ENCODE measurements at regions of chr2 and their contacts with region 1.

Region 1: DNA sequence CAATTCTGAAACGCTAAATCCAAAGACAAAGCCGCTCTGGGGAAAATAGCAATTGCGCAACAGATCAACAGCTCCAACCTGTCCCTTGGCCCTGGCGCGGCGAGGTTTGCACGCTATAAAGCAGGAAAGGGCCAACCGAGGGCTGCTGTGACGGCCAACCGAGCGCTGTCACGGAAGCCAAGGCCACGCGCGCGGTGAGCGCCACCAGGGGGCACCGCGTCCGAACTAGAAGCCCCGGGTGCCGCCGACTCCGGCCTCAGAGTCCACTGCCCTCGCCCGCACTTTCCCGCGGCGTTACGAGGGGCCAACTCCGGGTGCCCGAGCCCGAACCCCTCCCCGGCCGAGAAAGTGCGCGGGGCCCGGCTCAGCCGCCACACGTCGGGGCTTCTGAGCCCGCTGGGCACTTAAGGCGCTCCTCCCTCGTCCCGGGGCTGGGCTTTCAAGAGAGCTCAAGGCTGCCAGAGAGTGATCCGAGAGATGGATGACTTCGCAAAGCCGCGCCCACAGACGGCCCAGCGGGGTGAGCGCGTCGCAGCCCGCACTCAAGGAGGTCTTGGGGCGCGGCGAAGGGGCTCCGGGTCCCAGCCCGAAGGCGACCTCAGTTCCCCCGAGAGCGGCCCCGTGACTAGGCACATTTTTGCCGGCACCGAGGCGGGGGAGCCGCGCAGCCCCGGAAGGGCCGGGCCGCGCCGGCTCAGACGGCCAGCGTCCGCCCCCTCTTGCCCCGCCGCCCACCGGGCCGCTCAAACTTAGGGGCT is 897 bp downstream of the NFE2L2 start:
- DNase-seq: peak; percentile 89
- H3K4me3 ChIP-seq: peak overlapping the region; percentile 76
- CTCF ChIP-seq: peak; percentile 98

Region 2: DNA sequence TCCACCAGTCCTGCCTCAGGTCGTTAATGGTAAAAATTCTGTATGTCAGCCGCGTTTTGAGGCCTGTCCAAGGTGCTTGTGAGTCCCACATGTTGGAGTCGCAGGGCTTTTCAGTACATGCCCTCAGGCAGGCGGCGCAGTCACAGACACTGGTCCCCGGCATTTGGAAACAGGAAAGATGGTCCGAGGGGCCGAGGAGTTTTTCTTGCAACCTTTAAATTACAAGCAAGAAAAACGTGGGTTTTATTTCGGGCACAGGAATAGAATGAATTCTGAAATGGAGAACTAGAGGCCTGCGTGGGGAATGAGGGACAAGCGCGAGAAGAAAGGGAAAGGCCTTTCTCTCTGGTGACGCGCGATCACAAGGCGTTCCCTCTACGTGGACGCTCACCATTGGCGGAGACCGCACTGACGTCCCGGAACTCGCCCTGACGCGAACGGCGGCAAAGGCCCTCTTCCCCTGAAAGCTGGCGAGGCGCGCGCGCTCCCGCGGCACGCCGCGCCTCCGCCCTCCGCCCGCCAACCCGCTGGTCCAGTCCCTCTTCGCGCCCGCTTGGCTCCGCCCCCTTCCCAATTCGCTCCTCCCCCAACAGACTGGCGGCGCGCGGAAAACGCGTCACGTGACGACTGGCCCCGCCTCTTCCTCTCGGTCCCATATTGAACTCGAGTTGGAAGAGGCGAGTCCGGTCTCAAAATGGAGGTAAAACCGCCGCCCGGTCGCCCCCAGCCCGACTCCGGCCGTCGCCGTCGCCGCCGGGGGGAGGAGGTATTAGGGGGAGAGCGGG is 51.3 kb before region 1 on chr2 and contains the start of gene HNRNPA3:
- CTCF ChIA-PET with region 1: interaction called, 3 read pairs
- POLR2A ChIA-PET with region 1: interaction called, 20 read pairs
- DNase-seq: peak; percentile 91
- H3K4me3 ChIP-seq: peak within 1 kb of the TSS; percentile 65
- CTCF ChIP-seq: peak; percentile 23

Region 3: GRCh38 chr2:177239932-177240630 is 23.5 kb before region 1 on chr2:
- CTCF ChIA-PET with region 1: interaction called, 9 read pairs
- POLR2A ChIA-PET with region 1: interaction called, 12 read pairs
- DNase-seq: no peak
- H3K4me3 ChIP-seq: no peak overlapping the region
- CTCF ChIP-seq: no peak

Region 4: GRCh38 chr2:177281400-177282180 is 18.0 kb after region 1 on chr2:
- CTCF ChIA-PET with region 1: interaction called, 22 read pairs
- POLR2A ChIA-PET with region 1: interaction called, 14 read pairs
- DNase-seq: no peak
- H3K4me3 ChIP-seq: no peak overlapping the region
- CTCF ChIP-seq: no peak

Region 5: GRCh38 chr2:177419274-177419673 is 155.6 kb after region 1 on chr2:
- CTCF ChIA-PET with region 1: interaction called, 12 read pairs
- POLR2A ChIA-PET with region 1: no interaction called
- DNase-seq: peak; percentile 19
- H3K4me3 ChIP-seq: no peak overlapping the region
- CTCF ChIP-seq: no peak

Region 6: DNA sequence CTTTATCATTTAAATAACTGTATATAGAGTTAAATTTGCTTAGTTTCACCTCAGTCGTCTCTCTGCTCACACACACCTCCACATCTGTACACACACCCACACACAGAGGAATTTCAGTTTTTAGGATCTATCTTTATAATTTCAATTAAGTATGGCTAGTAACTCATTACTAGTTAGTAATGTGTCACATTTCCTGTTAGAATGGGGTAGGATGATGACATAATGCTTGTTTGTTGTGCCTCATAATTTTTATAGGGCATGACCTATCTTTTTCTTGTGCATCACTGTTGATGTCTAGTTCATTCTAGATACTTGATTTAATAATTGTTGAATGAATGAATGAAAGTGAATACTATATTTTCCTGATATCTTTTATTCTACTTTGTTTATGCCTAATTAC is 237.6 kb after region 1 on chr2:
- CTCF ChIA-PET with region 1: no interaction called
- POLR2A ChIA-PET with region 1: no interaction called
- DNase-seq: no peak
- H3K4me3 ChIP-seq: no peak overlapping the region
- CTCF ChIP-seq: no peak

Measured in AG04449 (cell line).